K562 (cell line): ENCODE measurements at regions of chr7 and their contacts with region 1.

Region 1: GRCh38 chr7:128830231-128831177 is at the start of gene FLNC:
- DNase-seq: peak; percentile 73 to 92 (median 82)
- ATAC-seq: peak; percentile 12
- H3K4me3 ChIP-seq: peak within 1 kb of the TSS; percentile 66
- H3K27ac ChIP-seq: peak within 1 kb of the TSS; percentile 90
- H3K4me1 ChIP-seq: peaks cover 46 to 74% of the 10 kb centered on the region in 2 experiments
- H3K27me3 ChIP-seq: no peaks in the 10 kb centered on the region
- CTCF ChIP-seq: no peak
- EP300 ChIP-seq: no peak
- POLR2A ChIP-seq: peak; percentile 73; the same call in 1 of the 2 replicates
- RAD21 ChIP-seq: peak in 1 of 2 experiments; percentile 15; a peak in 1 of 4 replicates
- polyA plus RNA-seq, gene FLNC: 0.90 to 1.1 TPM

Region 2: DNA sequence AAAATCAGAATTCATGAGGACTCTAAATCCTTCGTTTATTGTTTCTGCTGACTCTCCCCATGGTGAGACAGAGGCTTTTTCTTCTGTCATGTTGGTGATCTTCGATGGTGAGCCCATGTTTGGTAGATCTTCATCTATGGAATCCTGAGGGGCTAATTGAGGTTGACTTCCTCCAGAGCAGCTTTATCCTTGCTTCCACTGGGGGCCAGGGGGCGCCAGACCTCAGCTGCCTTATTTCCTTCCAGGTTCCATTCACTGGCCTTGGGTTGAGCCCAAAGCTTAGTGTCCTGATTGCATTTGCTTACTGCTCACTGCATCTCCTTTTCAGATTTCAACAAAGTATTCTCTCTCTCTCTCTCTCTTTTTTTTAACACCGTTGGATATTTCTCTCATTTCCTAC is 1325.8 kb before region 1 on chr7:
- CTCF ChIA-PET with region 1: no interaction called
- POLR2A ChIA-PET with region 1: no interaction called
- in situ Hi-C with region 1: no loop called
- intact Hi-C with region 1: no loop called
- DNase-seq: peak; percentile 31 to 65 (median 50)
- ATAC-seq: peak; percentile 97
- H3K4me3 ChIP-seq: no peak overlapping the region
- H3K27ac ChIP-seq: no peak overlapping the region
- H3K4me1 ChIP-seq: no peaks in the 10 kb centered on the region
- H3K27me3 ChIP-seq: peaks cover 0 to 1% of the 10 kb centered on the region in 2 experiments; a peak in 1 of 5 replicates
- CTCF ChIP-seq: peak; percentile 79 to 90 (median 85)
- EP300 ChIP-seq: no peak
- POLR2A ChIP-seq: no peak
- RAD21 ChIP-seq: peak; percentile 43 to 68; a peak in 3 of 4 replicates

Region 3: GRCh38 chr7:127927348-127927696 is 903.2 kb before region 1 on chr7:
- CTCF ChIA-PET with region 1: no interaction called
- POLR2A ChIA-PET with region 1: no interaction called
- in situ Hi-C with region 1: no loop called
- intact Hi-C with region 1: no loop called
- DNase-seq: peak in 1 of 4 experiments; percentile 27
- ATAC-seq: no peak; the same call in 2 of the 3 replicates
- H3K4me3 ChIP-seq: no peak overlapping the region
- H3K27ac ChIP-seq: no peak overlapping the region
- H3K4me1 ChIP-seq: no peaks in the 10 kb centered on the region; a peak in 1 of 5 replicates
- H3K27me3 ChIP-seq: no peaks in the 10 kb centered on the region
- CTCF ChIP-seq: no peak
- EP300 ChIP-seq: no peak
- POLR2A ChIP-seq: no peak
- RAD21 ChIP-seq: no peak

Region 4: DNA sequence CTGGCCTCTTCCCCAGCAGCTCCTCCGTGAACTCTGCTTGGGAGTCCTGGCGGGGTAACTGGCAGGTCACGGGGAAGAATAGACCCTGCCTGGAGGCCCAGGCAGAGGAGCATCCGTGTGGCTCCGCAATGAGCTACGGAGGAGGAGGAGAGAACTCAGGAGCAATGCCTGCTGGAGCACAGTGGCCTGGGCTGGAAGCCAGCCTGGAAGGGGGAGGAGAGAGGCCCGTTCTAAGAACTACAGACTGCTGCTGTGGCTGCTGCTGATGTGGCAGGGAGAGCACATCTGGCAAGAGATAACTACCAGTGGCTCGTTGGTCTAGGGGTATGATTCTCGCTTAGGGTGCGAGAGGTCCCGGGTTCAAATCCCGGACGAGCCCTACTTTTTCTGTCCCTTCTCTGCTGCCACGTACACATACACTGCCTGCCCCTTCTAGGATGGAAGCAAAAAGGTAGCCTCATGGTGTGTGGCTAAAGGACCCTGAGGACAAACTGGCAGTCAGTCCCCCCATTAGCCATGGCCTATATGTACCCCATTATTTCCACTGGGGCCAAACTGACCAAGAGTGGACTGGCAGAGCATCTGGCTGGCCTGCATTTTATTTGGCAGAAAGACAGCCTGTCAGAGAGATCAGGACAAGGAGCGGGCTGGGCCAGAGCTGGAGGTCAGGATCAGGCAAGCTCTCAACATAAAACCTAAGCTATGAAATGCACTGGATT is 47.2 kb before region 1 on chr7:
- CTCF ChIA-PET with region 1: no interaction called
- POLR2A ChIA-PET with region 1: interaction called, 10 read pairs
- in situ Hi-C with region 1: no loop called
- intact Hi-C with region 1: loop called (anchors 2 kb)
- DNase-seq: peak; percentile 92 to 95 (median 94)
- ATAC-seq: peak; percentile 93
- H3K4me3 ChIP-seq: peak overlapping the region; percentile 37
- H3K27ac ChIP-seq: peak overlapping the region; percentile 28
- H3K4me1 ChIP-seq: peaks cover 5 to 18% of the 10 kb centered on the region in 2 experiments; a peak in 4 of 5 replicates
- H3K27me3 ChIP-seq: no peaks in the 10 kb centered on the region; a peak in 1 of 5 replicates
- CTCF ChIP-seq: peak in 2 of 3 experiments; percentile 2 to 17; a peak in 1 of 6 replicates
- EP300 ChIP-seq: peak; percentile 86
- POLR2A ChIP-seq: no peak; the same call in 1 of the 2 replicates
- RAD21 ChIP-seq: peak; percentile 17 to 26; a peak in 2 of 4 replicates

Region 5: GRCh38 chr7:128791121-128791961 is 39.2 kb before region 1 on chr7:
- CTCF ChIA-PET with region 1: no interaction called
- POLR2A ChIA-PET with region 1: interaction called, 6 read pairs
- in situ Hi-C with region 1: no loop called
- intact Hi-C with region 1: loop called (anchors 2 kb)
- DNase-seq: peak; percentile 94 to 100 (median 98)
- ATAC-seq: peak; percentile 94
- H3K4me3 ChIP-seq: peak overlapping the region; percentile 69
- H3K27ac ChIP-seq: peak overlapping the region; percentile 65
- H3K4me1 ChIP-seq: peaks cover 18 to 46% of the 10 kb centered on the region in 2 experiments
- H3K27me3 ChIP-seq: no peaks in the 10 kb centered on the region
- CTCF ChIP-seq: no peak
- EP300 ChIP-seq: no peak
- POLR2A ChIP-seq: peak; percentile 82
- RAD21 ChIP-seq: 0 out of 4 replicates have a peak, but pooled peaks of 1 of the 2 experiments have one; percentile 13

Region 6: DNA sequence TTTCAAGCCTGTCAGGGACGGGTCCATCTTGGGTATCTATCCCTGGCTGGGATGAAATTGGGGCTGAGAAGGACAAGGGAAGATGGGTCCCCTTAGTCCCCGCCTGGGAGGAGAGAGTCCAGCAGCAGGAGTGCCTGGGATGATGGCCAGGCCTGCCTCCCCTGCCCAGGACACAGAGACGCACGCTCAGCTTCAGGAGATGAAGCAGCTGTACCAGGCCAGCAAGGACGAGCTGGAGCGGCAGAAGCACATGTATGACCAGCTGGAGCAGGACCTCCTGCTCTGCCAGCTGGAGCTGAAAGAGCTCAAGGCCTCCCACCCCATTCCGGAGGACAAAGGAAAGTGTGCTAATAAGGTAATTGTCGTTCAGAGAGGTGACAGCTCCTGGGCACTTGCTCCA is 23.3 kb before region 1 on chr7:
- CTCF ChIA-PET with region 1: no interaction called
- POLR2A ChIA-PET with region 1: interaction called, 15 read pairs
- in situ Hi-C with region 1: no loop called
- intact Hi-C with region 1: no loop called
- DNase-seq: no peak
- ATAC-seq: no peak
- H3K4me3 ChIP-seq: no peak overlapping the region
- H3K27ac ChIP-seq: no peak overlapping the region
- H3K4me1 ChIP-seq: peaks cover 5 to 7% of the 10 kb centered on the region in 2 experiments; a peak in 4 of 5 replicates
- H3K27me3 ChIP-seq: no peaks in the 10 kb centered on the region
- CTCF ChIP-seq: no peak
- EP300 ChIP-seq: no peak
- POLR2A ChIP-seq: no peak
- RAD21 ChIP-seq: no peak

Region 7: DNA sequence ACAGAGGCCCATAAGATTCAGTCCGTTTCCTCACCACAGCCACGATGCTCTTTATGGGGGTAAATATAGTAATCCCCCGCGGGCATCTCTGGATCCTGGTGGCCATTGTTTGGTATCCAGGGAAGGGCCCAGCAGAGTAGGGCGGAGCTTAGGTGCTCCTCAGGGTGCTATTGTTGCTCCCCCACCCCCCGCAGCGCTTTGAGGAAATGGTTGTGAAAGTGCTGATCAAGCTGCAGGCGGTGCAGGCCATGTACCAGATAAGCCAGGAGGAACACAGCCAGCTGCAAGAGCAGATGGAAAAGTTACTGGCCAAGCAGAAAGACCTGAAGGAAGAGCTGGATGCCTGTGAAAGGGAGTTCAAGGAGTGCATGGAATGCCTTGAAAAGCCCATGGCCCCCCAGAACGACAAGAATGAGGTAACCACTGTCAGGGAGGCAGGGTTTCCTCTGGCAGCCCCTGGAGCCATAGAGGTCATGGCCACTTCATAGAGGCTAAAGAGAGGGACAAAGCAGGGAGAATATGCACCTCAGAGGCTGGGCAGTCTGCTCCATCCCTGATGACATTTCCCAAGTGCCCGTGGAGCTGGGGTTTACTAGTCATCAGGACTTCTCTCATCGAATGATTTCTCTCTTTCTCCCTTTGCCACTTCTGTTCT is 17.9 kb before region 1 on chr7:
- CTCF ChIA-PET with region 1: no interaction called
- POLR2A ChIA-PET with region 1: interaction called, 39 read pairs
- in situ Hi-C with region 1: no loop called
- intact Hi-C with region 1: no loop called
- DNase-seq: peak; percentile 87 to 97 (median 92)
- ATAC-seq: peak; percentile 92
- H3K4me3 ChIP-seq: no peak overlapping the region
- H3K27ac ChIP-seq: peak overlapping the region; percentile 9; the same call in 1 of the 3 replicates
- H3K4me1 ChIP-seq: peaks cover 26 to 33% of the 10 kb centered on the region in 2 experiments; a peak in 4 of 5 replicates
- H3K27me3 ChIP-seq: no peaks in the 10 kb centered on the region
- CTCF ChIP-seq: 0 out of 6 replicates have a peak, but pooled peaks of 2 of the 3 experiments have one; percentile 1 to 3
- EP300 ChIP-seq: peak; percentile 79
- POLR2A ChIP-seq: no peak
- RAD21 ChIP-seq: peak in 1 of 2 experiments; percentile 31; a peak in 3 of 4 replicates

Region 8: GRCh38 chr7:128841921-128842651 is 11.6 kb after region 1 on chr7:
- CTCF ChIA-PET with region 1: no interaction called
- POLR2A ChIA-PET with region 1: interaction called, 31 read pairs
- in situ Hi-C with region 1: no loop called
- intact Hi-C with region 1: no loop called
- DNase-seq: peak; percentile 80 to 92 (median 90)
- ATAC-seq: peak; percentile 72
- H3K4me3 ChIP-seq: no peak overlapping the region
- H3K27ac ChIP-seq: no peak overlapping the region
- H3K4me1 ChIP-seq: peaks cover 0 to 56% of the 10 kb centered on the region in 2 experiments; a peak in 2 of 5 replicates
- H3K27me3 ChIP-seq: no peaks in the 10 kb centered on the region
- CTCF ChIP-seq: peak; percentile 65 to 85 (median 79)
- EP300 ChIP-seq: no peak
- POLR2A ChIP-seq: 0 out of 2 replicates have a peak, but pooled peaks have one; percentile 31
- RAD21 ChIP-seq: peak; percentile 27 to 36; a peak in 2 of 4 replicates

Region 9: GRCh38 chr7:128862571-128863432 is 32.3 kb after region 1 on chr7 and contains the start of gene ATP6V1F:
- CTCF ChIA-PET with region 1: no interaction called
- POLR2A ChIA-PET with region 1: interaction called, 21 read pairs
- in situ Hi-C with region 1: no loop called
- intact Hi-C with region 1: loop called (anchors 1 kb)
- DNase-seq: peak; percentile 100
- ATAC-seq: peak; percentile 73
- H3K4me3 ChIP-seq: peak within 1 kb of the TSS; percentile 71
- H3K27ac ChIP-seq: peak within 1 kb of the TSS; percentile 87
- H3K4me1 ChIP-seq: peaks cover 38 to 68% of the 10 kb centered on the region in 2 experiments
- H3K27me3 ChIP-seq: no peaks in the 10 kb centered on the region
- CTCF ChIP-seq: peak in 1 of 3 experiments; percentile 12; a peak in 2 of 6 replicates
- EP300 ChIP-seq: no peak
- POLR2A ChIP-seq: peak; percentile 90
- RAD21 ChIP-seq: no peak
- polyA plus RNA-seq, gene ATP6V1F: 733 to 1,123 TPM

Region 10: DNA sequence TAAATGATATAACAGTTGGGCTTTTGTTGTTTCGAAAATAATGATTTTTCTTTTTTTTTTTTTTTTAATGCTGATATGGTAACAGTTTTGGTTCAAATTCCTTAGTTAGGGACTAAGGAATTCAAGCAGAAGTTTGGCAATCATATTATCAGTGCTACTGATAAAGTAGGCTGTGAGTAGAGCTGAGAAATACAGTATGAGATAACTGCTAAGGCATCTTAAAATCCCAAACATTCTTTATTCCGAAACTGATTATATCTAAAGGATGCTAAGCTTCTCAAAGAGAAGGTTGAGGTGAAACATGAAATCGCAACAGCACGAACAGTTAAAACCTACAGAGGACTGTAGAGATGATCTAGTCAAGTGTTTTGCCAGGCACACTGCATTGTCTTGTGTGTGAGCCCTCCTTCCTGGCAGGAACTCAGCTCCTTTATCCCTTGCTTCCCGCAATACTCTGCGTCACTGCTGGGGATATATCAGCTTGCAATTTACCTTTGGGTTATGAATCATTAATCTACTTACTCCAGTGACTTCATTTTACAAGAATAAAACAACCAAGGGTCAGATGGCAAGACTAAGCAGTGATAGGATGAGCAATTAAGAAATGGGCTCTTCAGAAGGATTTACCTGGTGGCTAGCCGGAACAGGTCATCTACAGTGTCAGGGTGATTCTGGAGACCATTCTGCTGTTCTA is 143.9 kb after region 1 on chr7:
- CTCF ChIA-PET with region 1: no interaction called
- POLR2A ChIA-PET with region 1: no interaction called
- in situ Hi-C with region 1: no loop called
- intact Hi-C with region 1: no loop called
- DNase-seq: no peak
- ATAC-seq: no peak
- H3K4me3 ChIP-seq: no peak overlapping the region
- H3K27ac ChIP-seq: no peak overlapping the region
- H3K4me1 ChIP-seq: no peaks in the 10 kb centered on the region
- H3K27me3 ChIP-seq: no peaks in the 10 kb centered on the region
- CTCF ChIP-seq: no peak
- EP300 ChIP-seq: no peak
- POLR2A ChIP-seq: no peak
- RAD21 ChIP-seq: no peak